K562 (cell line): ENCODE measurements at regions of chr5 and their contacts with region 1.

Region 1: GRCh38 chr5:77876862-77877502 is 100.8 kb upstream of the TBCA start:
- DNase-seq: peak in 1 of 4 experiments; percentile 29
- ATAC-seq: no peak
- H3K4me3 ChIP-seq: no peak overlapping the region
- H3K27ac ChIP-seq: no peak overlapping the region
- H3K4me1 ChIP-seq: peaks cover 10 to 16% of the 10 kb centered on the region in 2 experiments; a peak in 3 of 5 replicates
- H3K27me3 ChIP-seq: peaks cover 2 to 12% of the 10 kb centered on the region in 2 experiments; a peak in 4 of 5 replicates
- CTCF ChIP-seq: no peak
- EP300 ChIP-seq: no peak
- POLR2A ChIP-seq: no peak
- RAD21 ChIP-seq: no peak

Region 2: GRCh38 chr5:78269088-78269703 is 392.2 kb after region 1 on chr5:
- CTCF ChIA-PET with region 1: no interaction called
- POLR2A ChIA-PET with region 1: no interaction called
- in situ Hi-C with region 1: no loop called
- intact Hi-C with region 1: loop called (anchors 10 kb)
- DNase-seq: peak in 2 of 4 experiments; percentile 15 to 16
- ATAC-seq: peak; percentile 77
- H3K4me3 ChIP-seq: no peak overlapping the region
- H3K27ac ChIP-seq: no peak overlapping the region
- H3K4me1 ChIP-seq: no peaks in the 10 kb centered on the region
- H3K27me3 ChIP-seq: no peaks in the 10 kb centered on the region
- CTCF ChIP-seq: peak in 2 of 3 experiments; percentile 9 to 46; a peak in 3 of 6 replicates
- EP300 ChIP-seq: no peak
- POLR2A ChIP-seq: no peak
- RAD21 ChIP-seq: peak in 1 of 2 experiments; percentile 60; a peak in 3 of 4 replicates